Posterior cingulate gyrus (tissue), 11 donors: ENCODE measurements at regions of chr6 and their contacts with region 1.

Region 1: GRCh38 chr6:149431905-149432775 is 32.1 kb downstream of the SUMO4 start:
- DNase-seq: peak; percentile 82 to 98 (median 94)

Region 2: DNA sequence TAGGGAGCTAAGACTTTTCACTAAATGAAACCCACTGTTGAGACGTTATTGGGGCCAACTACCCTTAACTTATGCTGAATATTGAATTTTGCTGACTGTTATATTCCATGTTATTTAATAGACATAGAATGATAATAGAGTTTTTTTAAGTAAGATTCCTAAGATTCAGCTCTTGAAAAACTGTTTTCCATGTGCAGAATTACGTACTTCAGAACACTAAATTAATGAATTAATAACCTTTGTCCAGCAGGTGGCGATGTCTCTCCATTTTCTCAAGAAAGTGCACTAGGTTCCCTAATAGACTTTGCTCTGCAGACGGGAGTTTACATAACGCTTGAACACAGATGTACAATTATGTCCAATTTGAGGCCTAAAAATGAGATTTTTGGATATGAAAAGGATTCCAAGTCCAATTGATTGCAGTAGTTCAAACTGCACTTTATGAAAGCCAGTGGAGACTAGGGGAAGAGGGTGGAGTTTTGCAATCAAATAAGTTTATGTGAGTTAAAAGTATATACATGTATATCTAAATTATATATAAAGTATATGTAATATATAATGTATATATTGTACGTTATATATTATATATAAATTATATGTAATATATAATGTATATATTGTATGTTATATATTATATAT is 403.3 kb before region 1 on chr6:
- intact Hi-C with region 1: loop called (anchors 1 kb)
- DNase-seq: peak in 2 of 10 donors; percentile 54 to 58

Region 3: GRCh38 chr6:149082286-149082707 is 349.8 kb before region 1 on chr6:
- intact Hi-C with region 1: loop called (anchors 1 kb)
- DNase-seq: peak; percentile 58 to 95 (median 83)

Region 4: DNA sequence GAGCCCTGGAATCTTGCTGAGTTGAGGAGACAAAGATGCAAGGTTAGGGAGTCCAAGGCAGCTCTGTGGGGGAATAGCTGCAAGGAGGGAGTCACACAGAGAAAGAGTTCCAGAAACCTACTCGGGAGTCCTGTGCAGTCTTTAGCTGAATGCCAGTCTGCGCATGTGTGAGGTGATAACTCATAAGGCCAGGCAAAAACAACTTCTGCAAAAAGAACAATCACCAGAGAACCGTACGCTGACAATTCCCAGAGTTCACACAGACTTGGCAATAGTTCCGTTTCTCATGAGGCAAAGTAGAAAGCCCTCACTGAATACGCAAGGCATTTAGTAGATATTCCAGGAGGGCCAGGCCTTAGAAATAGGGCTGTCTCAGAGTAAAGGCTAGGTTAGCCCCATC is 249.9 kb before region 1 on chr6:
- intact Hi-C with region 1: loop called (anchors 5 kb)
- DNase-seq: no peak

Region 5: GRCh38 chr6:149513915-149514314 is 81.8 kb after region 1 on chr6:
- intact Hi-C with region 1: loop called (anchors 10 kb)
- DNase-seq: no peak